Mammary epithelial cell (primary cell): ENCODE measurements at regions of chr19 and their contacts with region 1.

Region 1: GRCh38 chr19:45245334-45245787 is at the start of gene EXOC3L2:
- DNase-seq: no peak
- H3K4me3 ChIP-seq: no peak within 1 kb of the TSS
- H3K27ac ChIP-seq: no peak within 1 kb of the TSS
- H3K4me1 ChIP-seq: peaks cover 5% of the 10 kb centered on the region
- H3K27me3 ChIP-seq: no peaks in the 10 kb centered on the region
- CTCF ChIP-seq: no peak
- total RNA-seq, gene EXOC3L2: 0.35 TPM in 1 of 2 donors, not detected in the other

Region 2: GRCh38 chr19:45038931-45039893 is 206.1 kb before region 1 on chr19 and contains the start of gene CLASRP:
- CTCF ChIA-PET with region 1: no interaction called
- dilution Hi-C with region 1: loop called (anchors 25 kb)
- in situ Hi-C with region 1: no loop called
- intact Hi-C with region 1: no loop called
- DNase-seq: peak; percentile 83
- H3K4me3 ChIP-seq: peak within 1 kb of the TSS; percentile 80 to 99 (median 98)
- H3K27ac ChIP-seq: peak within 1 kb of the TSS; percentile 92
- H3K4me1 ChIP-seq: peaks cover 11% of the 10 kb centered on the region
- H3K27me3 ChIP-seq: no peaks in the 10 kb centered on the region
- CTCF ChIP-seq: no peak
- total RNA-seq, gene CLASRP: 19.5 to 69.5 TPM

Region 3: DNA sequence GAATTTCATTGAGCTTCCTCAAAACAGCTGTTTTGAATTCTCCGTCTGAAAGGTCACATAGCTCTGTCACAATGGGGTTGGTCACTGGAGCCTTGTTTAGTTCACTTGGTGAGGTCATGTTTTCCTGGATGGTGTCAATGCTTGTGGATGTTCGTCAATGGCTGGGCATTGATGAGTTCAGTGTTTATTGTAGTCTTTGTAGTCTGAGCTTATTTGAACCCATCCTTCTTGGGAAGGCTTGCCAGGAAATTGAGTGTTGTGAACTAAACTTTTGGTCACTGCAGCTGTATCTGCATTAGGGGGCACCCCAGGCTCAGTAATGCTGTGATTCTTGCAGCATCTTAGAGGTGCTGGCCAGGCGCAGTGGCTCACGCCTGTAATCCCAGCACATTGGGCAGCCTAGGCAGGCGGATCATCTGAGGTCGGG is 44.8 kb before region 1 on chr19:
- CTCF ChIA-PET with region 1: no interaction called
- dilution Hi-C with region 1: no loop called
- in situ Hi-C with region 1: loop called in 1 of 2 experiments (anchors 10 kb)
- intact Hi-C with region 1: loop called (anchors 1 kb)
- DNase-seq: peak; percentile 30
- H3K4me3 ChIP-seq: no peak overlapping the region
- H3K27ac ChIP-seq: no peak overlapping the region
- H3K4me1 ChIP-seq: no peaks in the 10 kb centered on the region
- H3K27me3 ChIP-seq: no peaks in the 10 kb centered on the region
- CTCF ChIP-seq: peak; percentile 39 to 47

Region 4: GRCh38 chr19:45234089-45234869 is 11.1 kb before region 1 on chr19:
- CTCF ChIA-PET with region 1: no interaction called
- dilution Hi-C with region 1: no loop called
- in situ Hi-C with region 1: no loop called
- intact Hi-C with region 1: no loop called
- DNase-seq: no peak
- H3K4me3 ChIP-seq: no peak overlapping the region
- H3K27ac ChIP-seq: no peak overlapping the region
- H3K4me1 ChIP-seq: peaks cover 18% of the 10 kb centered on the region
- H3K27me3 ChIP-seq: no peaks in the 10 kb centered on the region
- CTCF ChIP-seq: no peak

Region 5: GRCh38 chr19:45276284-45276687 is 30.9 kb after region 1 on chr19:
- CTCF ChIA-PET with region 1: no interaction called
- dilution Hi-C with region 1: no loop called
- in situ Hi-C with region 1: no loop called
- intact Hi-C with region 1: no loop called
- DNase-seq: no peak
- H3K4me3 ChIP-seq: no peak overlapping the region
- H3K27ac ChIP-seq: no peak overlapping the region
- H3K4me1 ChIP-seq: no peaks in the 10 kb centered on the region
- H3K27me3 ChIP-seq: no peaks in the 10 kb centered on the region
- CTCF ChIP-seq: no peak